Activated naive CD4-positive, alpha-beta T cell treated with anti-CD3 and anti-CD28 coated beads, Interleukin-2, amount 10 ng/mL, durations not matched to agents 7 days and 5 days (primary cell): ENCODE measurements at regions of chr5 and their contacts with region 1.

Region 1: DNA sequence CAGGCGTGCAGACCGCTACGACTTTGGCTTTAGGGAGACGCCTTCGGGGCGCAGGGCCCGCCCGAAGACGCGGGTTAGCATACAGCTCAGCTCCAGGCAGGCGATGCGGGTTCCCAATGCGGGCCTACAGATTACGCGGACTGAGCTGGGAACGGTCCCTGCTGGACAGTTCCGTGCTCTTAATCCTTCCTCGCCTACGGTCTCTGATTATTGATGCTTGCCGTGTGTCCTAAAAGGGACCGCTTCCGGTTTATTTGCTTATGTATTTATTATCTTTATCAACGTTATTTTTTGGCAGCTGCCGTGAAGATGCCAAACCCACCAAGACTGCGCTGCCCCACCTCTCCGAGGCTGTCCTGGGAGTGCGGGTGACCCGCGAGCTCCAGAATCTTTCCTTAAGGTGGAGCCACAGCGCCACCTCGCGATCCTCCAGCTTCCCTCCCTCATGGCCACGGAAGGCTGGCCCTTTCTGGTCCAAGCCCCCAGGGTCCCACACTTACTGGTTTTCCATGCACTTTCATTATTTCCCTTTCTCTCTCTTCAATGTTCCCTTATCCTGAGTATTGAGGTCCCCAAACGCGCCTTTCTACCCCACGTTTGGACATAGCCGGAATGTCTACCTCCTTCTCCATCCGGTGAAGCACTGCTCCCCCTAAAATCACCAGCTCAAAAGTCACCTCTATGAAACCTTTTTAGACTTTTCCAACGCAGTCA is 7.0 kb upstream of the EBF1 start:
- DNase-seq: peak; percentile 78
- H3K4me3 Mint-ChIP-seq: peak overlapping the region; percentile 61
- H3K27ac Mint-ChIP-seq: no peak overlapping the region
- H3K4me1 Mint-ChIP-seq: peaks cover 21% of the 10 kb centered on the region
- H3K27me3 Mint-ChIP-seq: peaks cover 74% of the 10 kb centered on the region

Region 2: GRCh38 chr5:158074992-158075769 is 1031.5 kb before region 1 on chr5:
- CTCF ChIA-PET with region 1: interaction called, 15 read pairs
- DNase-seq: peak; percentile 60
- H3K4me3 Mint-ChIP-seq: no peak overlapping the region
- H3K27ac Mint-ChIP-seq: no peak overlapping the region
- H3K4me1 Mint-ChIP-seq: no peaks in the 10 kb centered on the region
- H3K27me3 Mint-ChIP-seq: peaks cover 11% of the 10 kb centered on the region

Region 3: GRCh38 chr5:158174918-158175851 is 931.5 kb before region 1 on chr5:
- CTCF ChIA-PET with region 1: interaction called, 31 read pairs
- DNase-seq: peak; percentile 68
- H3K4me3 Mint-ChIP-seq: no peak overlapping the region
- H3K27ac Mint-ChIP-seq: no peak overlapping the region
- H3K4me1 Mint-ChIP-seq: no peaks in the 10 kb centered on the region
- H3K27me3 Mint-ChIP-seq: peaks cover 15% of the 10 kb centered on the region

Region 4: GRCh38 chr5:158695595-158696330 is 411.0 kb before region 1 on chr5:
- CTCF ChIA-PET with region 1: interaction called, 174 read pairs
- DNase-seq: peak; percentile 71
- H3K4me3 Mint-ChIP-seq: no peak overlapping the region
- H3K27ac Mint-ChIP-seq: no peak overlapping the region
- H3K4me1 Mint-ChIP-seq: no peaks in the 10 kb centered on the region
- H3K27me3 Mint-ChIP-seq: peaks cover 9% of the 10 kb centered on the region

Region 5: GRCh38 chr5:159341914-159342313 is 235.2 kb after region 1 on chr5:
- CTCF ChIA-PET with region 1: no interaction called
- DNase-seq: peak; percentile 58
- H3K4me3 Mint-ChIP-seq: no peak overlapping the region
- H3K27ac Mint-ChIP-seq: peak overlapping the region; percentile 26
- H3K4me1 Mint-ChIP-seq: peaks cover 68% of the 10 kb centered on the region
- H3K27me3 Mint-ChIP-seq: peaks cover 19% of the 10 kb centered on the region